ENCODE measurements at regions of chr14 and their contacts with region 1.

Region 1: GRCh38 chr14:104650057-104650981 is 39.1 kb upstream of the INF2 start:
- H3K4me3 Mint-ChIP-seq: peak overlapping the region; percentile 73
- H3K27ac Mint-ChIP-seq: peak overlapping the region; percentile 82
- H3K4me1 Mint-ChIP-seq: peaks cover 55% of the 10 kb centered on the region
- H3K27me3 Mint-ChIP-seq: peaks cover 15% of the 10 kb centered on the region

Region 2: GRCh38 chr14:104563742-104564615 is 86.3 kb before region 1 on chr14:
- intact Hi-C with region 1: no loop called
- H3K4me3 Mint-ChIP-seq: no peak overlapping the region
- H3K27ac Mint-ChIP-seq: no peak overlapping the region
- H3K4me1 Mint-ChIP-seq: peaks cover 5% of the 10 kb centered on the region
- H3K27me3 Mint-ChIP-seq: peaks cover 25% of the 10 kb centered on the region

Region 3: GRCh38 chr14:104689109-104689880 is 39.0 kb after region 1 on chr14 and contains the start of gene INF2:
- intact Hi-C with region 1: loop called (anchors 1 kb)
- H3K4me3 Mint-ChIP-seq: peak within 1 kb of the TSS; percentile 86
- H3K27ac Mint-ChIP-seq: peak within 1 kb of the TSS; percentile 84
- H3K4me1 Mint-ChIP-seq: peaks cover 85% of the 10 kb centered on the region
- H3K27me3 Mint-ChIP-seq: peaks cover 19% of the 10 kb centered on the region

Region 4: GRCh38 chr14:104708606-104709268 is 58.4 kb after region 1 on chr14:
- intact Hi-C with region 1: loop called (anchors 2 kb)
- H3K4me3 Mint-ChIP-seq: no peak overlapping the region
- H3K27ac Mint-ChIP-seq: no peak overlapping the region
- H3K4me1 Mint-ChIP-seq: peaks cover 5% of the 10 kb centered on the region
- H3K27me3 Mint-ChIP-seq: no peaks in the 10 kb centered on the region